WTC11 (cell line): ENCODE measurements at regions of chr7 and their contacts with region 1.

Region 1: DNA sequence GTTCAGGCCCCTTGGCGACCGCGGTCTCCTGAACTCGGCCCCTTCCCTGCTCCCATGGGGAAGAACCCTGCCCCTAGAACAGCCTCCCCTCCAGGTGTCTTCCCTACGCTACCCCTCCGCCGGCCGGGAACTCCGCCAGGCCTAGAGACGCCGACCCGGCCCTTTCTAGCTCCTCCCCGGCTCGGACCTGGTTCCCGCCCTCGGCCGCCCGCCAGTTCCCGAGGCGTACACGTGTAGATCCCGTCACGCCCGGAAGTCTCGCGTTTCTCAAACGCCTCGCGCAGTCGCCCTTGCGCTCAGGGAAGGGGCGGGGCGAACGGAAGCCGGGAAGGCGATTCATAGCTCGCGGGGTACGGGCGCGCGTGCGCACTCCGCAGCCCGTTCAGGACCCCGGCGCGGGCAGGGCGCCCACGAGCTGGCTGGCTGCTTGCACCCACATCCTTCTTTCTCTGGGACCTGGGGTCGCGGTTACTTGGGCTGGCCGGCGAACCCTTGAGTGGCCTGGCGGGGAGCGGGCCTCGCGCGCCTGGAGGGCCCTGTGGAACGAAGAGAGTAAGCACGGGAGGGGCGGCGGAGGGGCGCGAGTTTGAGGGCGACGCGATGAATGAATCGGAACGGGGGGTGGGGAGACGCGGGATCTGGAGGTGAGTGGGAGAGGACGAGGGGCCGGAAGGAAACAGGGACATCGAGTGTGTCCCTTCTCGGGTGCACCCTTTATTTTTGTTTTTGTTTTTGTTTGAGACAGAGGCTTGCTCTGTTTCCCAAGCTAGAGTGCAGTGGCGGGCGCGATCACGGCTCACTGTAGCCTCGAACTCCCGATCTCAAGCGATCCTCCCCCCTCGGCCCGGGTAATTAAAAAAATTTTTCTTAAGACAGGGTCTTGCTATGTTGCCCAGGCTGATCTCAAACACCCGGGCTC is at the start of gene POP7:
- DNase-seq: peak; percentile 99
- ATAC-seq: peak; percentile 97
- H3K4me3 Mint-ChIP-seq: peak within 1 kb of the TSS; percentile 96
- H3K27ac Mint-ChIP-seq: peak within 1 kb of the TSS; percentile 88
- H3K4me1 Mint-ChIP-seq: peaks cover 8% of the 10 kb centered on the region
- H3K27me3 Mint-ChIP-seq: no peaks in the 10 kb centered on the region
- CTCF ChIP-seq: no peak
- total RNA-seq, gene POP7: 71.9 to 79.2 TPM (median 78.1 TPM) in 3 replicates

Region 2: GRCh38 chr7:100464210-100464660 is 241.8 kb before region 1 on chr7 and contains the start of gene SPACDR:
- CTCF ChIA-PET with region 1: no interaction called
- POLR2A ChIA-PET with region 1: no interaction called
- DNase-seq: no peak
- ATAC-seq: no peak
- H3K4me3 Mint-ChIP-seq: no peak within 1 kb of the TSS
- H3K27ac Mint-ChIP-seq: peak within 1 kb of the TSS; percentile 53; the same call in 1 of the 2 replicates
- H3K4me1 Mint-ChIP-seq: no peaks in the 10 kb centered on the region
- H3K27me3 Mint-ChIP-seq: no peaks in the 10 kb centered on the region; the same call in none of the 2 replicates
- CTCF ChIP-seq: no peak
- total RNA-seq, gene SPACDR: 0.33 to 0.48 TPM (median 0.39 TPM) in 3 replicates

Region 3: GRCh38 chr7:100563809-100564400 is 142.1 kb before region 1 on chr7:
- CTCF ChIA-PET with region 1: interaction called, 14 read pairs
- POLR2A ChIA-PET with region 1: no interaction called
- DNase-seq: peak; percentile 94
- ATAC-seq: peak; percentile 72
- H3K4me3 Mint-ChIP-seq: no peak overlapping the region
- H3K27ac Mint-ChIP-seq: no peak overlapping the region
- H3K4me1 Mint-ChIP-seq: peaks cover 23% of the 10 kb centered on the region
- H3K27me3 Mint-ChIP-seq: no peaks in the 10 kb centered on the region; the same call in 1 of the 2 replicates
- CTCF ChIP-seq: peak; percentile 99

Region 4: DNA sequence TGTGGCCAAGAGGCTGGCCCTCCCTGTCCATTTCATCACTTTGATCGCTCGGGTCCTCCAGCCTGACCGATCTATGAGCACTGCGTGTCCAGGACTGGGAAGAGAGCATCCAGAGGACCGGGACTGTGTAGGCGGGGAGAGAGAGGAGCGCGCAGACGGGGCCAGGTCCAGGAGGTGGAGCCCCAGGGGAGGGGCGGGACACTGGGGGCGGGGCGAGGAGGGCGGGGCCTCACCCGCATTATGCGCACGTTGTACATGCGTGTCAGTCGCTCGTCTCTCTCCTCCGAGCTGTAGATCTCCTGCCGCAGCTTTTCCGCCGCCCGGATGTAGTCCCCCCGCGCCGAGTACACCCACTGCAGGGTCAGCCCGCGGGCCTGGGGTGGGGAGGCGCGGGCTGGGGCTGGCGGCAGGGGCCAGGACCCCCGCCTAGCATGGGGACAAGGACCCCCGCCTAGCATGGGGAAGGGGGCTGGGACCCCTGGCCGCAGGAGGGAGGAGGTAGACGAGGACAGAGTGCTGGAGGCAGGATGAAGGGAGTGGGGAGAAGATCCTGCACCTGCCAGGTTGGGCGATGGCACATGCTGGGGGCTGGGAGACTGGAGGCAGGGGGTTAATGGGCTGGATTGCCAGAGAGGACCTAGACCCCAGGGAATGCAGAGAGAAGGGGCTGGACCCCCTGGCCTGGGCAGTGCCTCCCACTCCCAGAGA is 79.3 kb before region 1 on chr7:
- CTCF ChIA-PET with region 1: interaction called, 24 read pairs
- POLR2A ChIA-PET with region 1: no interaction called
- DNase-seq: peak; percentile 87
- ATAC-seq: peak; percentile 89
- H3K4me3 Mint-ChIP-seq: peak overlapping the region; percentile 65
- H3K27ac Mint-ChIP-seq: no peak overlapping the region
- H3K4me1 Mint-ChIP-seq: peaks cover 7% of the 10 kb centered on the region
- H3K27me3 Mint-ChIP-seq: peaks cover 22% of the 10 kb centered on the region
- CTCF ChIP-seq: no peak

Region 5: GRCh38 chr7:100680167-100680575 is 25.8 kb before region 1 on chr7:
- CTCF ChIA-PET with region 1: interaction called, 12 read pairs
- POLR2A ChIA-PET with region 1: interaction called, 9 read pairs
- DNase-seq: no peak
- ATAC-seq: no peak
- H3K4me3 Mint-ChIP-seq: no peak overlapping the region
- H3K27ac Mint-ChIP-seq: peak overlapping the region; percentile 62; the same call in 1 of the 2 replicates
- H3K4me1 Mint-ChIP-seq: peaks cover 11% of the 10 kb centered on the region
- H3K27me3 Mint-ChIP-seq: no peaks in the 10 kb centered on the region
- CTCF ChIP-seq: no peak

Region 6: DNA sequence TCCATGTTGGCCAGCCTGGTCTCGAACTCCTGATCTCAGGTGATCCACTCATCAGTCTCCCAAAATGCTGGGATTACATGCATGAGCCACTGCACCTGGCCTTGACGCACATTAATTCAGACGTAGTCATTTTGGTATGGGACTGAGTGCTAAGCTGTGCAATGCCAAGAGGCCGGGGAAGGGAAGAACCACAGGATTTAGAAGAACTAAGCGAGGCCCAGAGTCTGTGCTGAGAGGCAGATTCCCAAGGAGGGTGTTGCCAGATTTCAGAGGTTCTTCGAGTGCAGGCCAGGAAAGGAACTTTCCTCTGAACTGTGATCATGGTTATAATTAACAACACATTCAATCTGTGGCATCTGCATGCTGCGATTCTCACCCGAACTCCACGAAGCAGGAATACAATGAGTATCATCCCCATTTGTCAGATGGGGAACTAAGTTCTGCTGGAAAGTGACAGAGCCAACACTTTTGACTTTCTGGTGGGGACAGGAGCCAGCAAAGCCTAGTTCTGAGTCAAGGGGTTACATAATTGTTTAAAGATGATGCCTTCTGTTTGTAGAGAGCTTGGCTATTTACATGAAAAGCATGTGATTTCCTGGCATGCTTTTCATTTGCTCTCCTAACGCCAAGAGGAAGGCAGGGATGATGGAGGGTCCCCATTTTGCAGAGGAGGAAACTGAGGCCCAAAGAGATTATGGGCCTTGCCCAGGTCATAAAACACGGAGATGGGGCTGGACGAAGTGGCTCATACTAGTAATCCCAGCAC is 21.2 kb after region 1 on chr7:
- CTCF ChIA-PET with region 1: interaction called, 119 read pairs
- POLR2A ChIA-PET with region 1: no interaction called
- DNase-seq: no peak
- ATAC-seq: no peak
- H3K4me3 Mint-ChIP-seq: no peak overlapping the region
- H3K27ac Mint-ChIP-seq: no peak overlapping the region
- H3K4me1 Mint-ChIP-seq: peaks cover 3% of the 10 kb centered on the region; the same call in 1 of the 2 replicates
- H3K27me3 Mint-ChIP-seq: peaks cover 14% of the 10 kb centered on the region
- CTCF ChIP-seq: no peak

Region 7: GRCh38 chr7:100803398-100804233 is 97.6 kb after region 1 on chr7:
- CTCF ChIA-PET with region 1: interaction called, 39 read pairs
- POLR2A ChIA-PET with region 1: interaction called, 4 read pairs
- DNase-seq: peak; percentile 59
- ATAC-seq: peak; percentile 21
- H3K4me3 Mint-ChIP-seq: no peak overlapping the region
- H3K27ac Mint-ChIP-seq: peak overlapping the region; percentile 83
- H3K4me1 Mint-ChIP-seq: peaks cover 24% of the 10 kb centered on the region
- H3K27me3 Mint-ChIP-seq: no peaks in the 10 kb centered on the region
- CTCF ChIP-seq: no peak

Region 8: GRCh38 chr7:100852048-100852872 is 146.2 kb after region 1 on chr7 and contains the start of gene SLC12A9:
- CTCF ChIA-PET with region 1: interaction called, 53 read pairs
- POLR2A ChIA-PET with region 1: interaction called, 9 read pairs
- DNase-seq: peak; percentile 93
- ATAC-seq: peak; percentile 95
- H3K4me3 Mint-ChIP-seq: peak within 1 kb of the TSS; percentile 93
- H3K27ac Mint-ChIP-seq: peak within 1 kb of the TSS; percentile 67
- H3K4me1 Mint-ChIP-seq: 0 out of 2 replicates have a peak, but pooled peaks cover 7% of the 10 kb centered on the region
- H3K27me3 Mint-ChIP-seq: no peaks in the 10 kb centered on the region
- CTCF ChIP-seq: peak; percentile 78
- total RNA-seq, gene SLC12A9: 32.6 to 39.3 TPM (median 34.1 TPM) in 3 replicates